ENCODE measurements at regions of chr15 and their contacts with region 1.

Region 1: DNA sequence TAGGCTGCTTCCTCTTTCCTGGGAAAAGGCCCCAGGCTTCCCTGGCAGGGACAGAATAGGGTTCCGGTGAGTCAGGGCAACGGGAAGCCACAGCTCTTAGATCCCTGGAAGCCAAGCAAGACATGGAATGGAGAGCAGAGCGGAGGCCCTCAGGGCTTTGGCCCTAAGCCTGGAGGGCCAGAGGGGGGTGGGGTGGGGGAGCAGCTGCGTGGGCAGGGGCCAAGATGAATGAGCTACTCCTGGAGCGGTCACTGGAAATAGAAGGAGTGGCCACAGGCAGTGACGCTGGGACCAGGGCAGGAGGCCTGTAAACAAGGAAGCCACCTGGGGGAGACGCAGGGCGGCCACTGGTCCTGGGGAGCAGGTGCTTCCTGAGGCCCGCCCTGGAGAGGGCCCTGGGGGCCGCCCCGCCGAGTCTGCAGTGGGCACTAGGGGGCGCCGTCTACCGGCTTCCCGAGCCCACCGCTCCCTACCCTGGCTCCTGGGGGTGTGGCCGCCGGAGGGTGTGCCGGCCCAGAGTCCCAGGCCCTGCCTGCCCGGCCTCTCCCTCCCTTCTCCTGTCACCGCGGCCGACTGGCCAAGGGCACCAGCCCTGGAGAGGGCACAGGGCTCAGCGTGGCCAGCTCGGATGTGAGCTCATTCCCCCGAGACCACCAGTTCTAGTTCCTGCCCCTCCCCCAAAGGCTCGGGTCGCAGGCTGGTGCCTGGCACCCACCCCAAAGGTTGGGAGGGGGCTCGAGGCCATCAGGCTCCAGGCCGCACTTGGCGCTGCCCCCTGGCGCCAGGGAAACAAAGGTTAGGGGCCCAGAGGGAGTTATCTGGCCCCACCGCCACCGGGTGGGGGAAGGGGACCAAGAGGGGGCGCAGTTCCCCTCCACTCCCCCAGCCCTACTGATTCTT is 12.1 kb downstream of the VPS18 start:
- DNase-seq: peak; percentile 91
- ATAC-seq: peak; percentile 81
- H3K4me3 Mint-ChIP-seq: peak overlapping the region; percentile 69
- H3K27ac Mint-ChIP-seq: peak overlapping the region; percentile 82
- H3K4me1 Mint-ChIP-seq: peaks cover 27% of the 10 kb centered on the region
- H3K27me3 Mint-ChIP-seq: no peaks in the 10 kb centered on the region

Region 2: GRCh38 chr15:40190591-40190990 is 715.8 kb before region 1 on chr15:
- CTCF ChIA-PET with region 1: no interaction called
- POLR2A ChIA-PET with region 1: no interaction called
- intact Hi-C with region 1: no loop called
- DNase-seq: no peak
- ATAC-seq: no peak
- H3K4me3 Mint-ChIP-seq: no peak overlapping the region
- H3K27ac Mint-ChIP-seq: no peak overlapping the region
- H3K4me1 Mint-ChIP-seq: no peaks in the 10 kb centered on the region
- H3K27me3 Mint-ChIP-seq: no peaks in the 10 kb centered on the region

Region 3: DNA sequence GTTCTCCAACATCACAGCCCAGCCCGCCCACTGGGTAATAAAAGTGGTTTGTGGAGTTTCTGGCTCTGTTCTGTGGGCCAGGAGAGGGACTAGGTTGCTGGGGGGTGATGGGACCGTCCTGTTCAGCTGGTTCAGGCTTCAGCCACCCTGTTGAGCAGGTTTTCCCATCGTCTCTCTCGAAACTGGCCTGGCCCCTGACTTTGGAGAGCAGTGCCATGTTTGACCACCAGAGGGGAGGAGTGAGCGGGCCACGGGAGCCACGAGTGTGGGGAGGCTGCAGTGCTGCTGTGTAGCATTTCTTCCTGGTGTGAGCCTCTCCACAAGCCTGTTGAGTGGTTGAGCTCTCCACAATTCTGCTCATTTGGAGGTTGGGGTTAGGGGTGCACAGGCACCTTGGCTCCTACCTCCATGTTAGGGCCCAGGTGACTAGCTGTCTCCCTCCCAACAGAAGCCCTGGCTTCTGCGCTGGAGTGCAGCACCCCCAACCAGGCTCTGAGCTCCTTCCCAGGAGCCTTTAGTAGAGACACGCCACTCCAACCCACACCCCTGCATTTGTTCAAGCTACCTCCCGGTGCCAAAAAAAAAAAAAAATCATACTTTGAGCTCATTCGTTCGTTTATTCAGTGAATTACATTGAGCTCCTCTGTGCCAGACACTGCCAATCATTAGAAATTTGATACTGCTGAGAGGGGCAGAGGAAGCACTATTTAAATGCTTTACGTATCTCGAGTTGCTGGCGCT is 48.6 kb before region 1 on chr15:
- CTCF ChIA-PET with region 1: interaction called, 65 read pairs
- POLR2A ChIA-PET with region 1: no interaction called
- intact Hi-C with region 1: no loop called
- DNase-seq: peak; percentile 89
- ATAC-seq: peak; percentile 94
- H3K4me3 Mint-ChIP-seq: no peak overlapping the region
- H3K27ac Mint-ChIP-seq: no peak overlapping the region
- H3K4me1 Mint-ChIP-seq: peaks cover 3% of the 10 kb centered on the region
- H3K27me3 Mint-ChIP-seq: no peaks in the 10 kb centered on the region

Region 4: GRCh38 chr15:40941528-40942336 is 35.4 kb after region 1 on chr15:
- CTCF ChIA-PET with region 1: interaction called, 9 read pairs
- POLR2A ChIA-PET with region 1: interaction called, 6 read pairs
- intact Hi-C with region 1: loop called in 1 of 2 experiments (anchors 1 kb)
- DNase-seq: peak; percentile 81
- ATAC-seq: peak; percentile 82
- H3K4me3 Mint-ChIP-seq: peak overlapping the region; percentile 80
- H3K27ac Mint-ChIP-seq: peak overlapping the region; percentile 92
- H3K4me1 Mint-ChIP-seq: peaks cover 39% of the 10 kb centered on the region
- H3K27me3 Mint-ChIP-seq: no peaks in the 10 kb centered on the region

Region 5: GRCh38 chr15:40964634-40965033 is 58.3 kb after region 1 on chr15:
- CTCF ChIA-PET with region 1: interaction called, 11 read pairs
- POLR2A ChIA-PET with region 1: no interaction called
- intact Hi-C with region 1: no loop called
- DNase-seq: no peak
- ATAC-seq: no peak
- H3K4me3 Mint-ChIP-seq: no peak overlapping the region
- H3K27ac Mint-ChIP-seq: no peak overlapping the region
- H3K4me1 Mint-ChIP-seq: no peaks in the 10 kb centered on the region
- H3K27me3 Mint-ChIP-seq: no peaks in the 10 kb centered on the region

Region 6: DNA sequence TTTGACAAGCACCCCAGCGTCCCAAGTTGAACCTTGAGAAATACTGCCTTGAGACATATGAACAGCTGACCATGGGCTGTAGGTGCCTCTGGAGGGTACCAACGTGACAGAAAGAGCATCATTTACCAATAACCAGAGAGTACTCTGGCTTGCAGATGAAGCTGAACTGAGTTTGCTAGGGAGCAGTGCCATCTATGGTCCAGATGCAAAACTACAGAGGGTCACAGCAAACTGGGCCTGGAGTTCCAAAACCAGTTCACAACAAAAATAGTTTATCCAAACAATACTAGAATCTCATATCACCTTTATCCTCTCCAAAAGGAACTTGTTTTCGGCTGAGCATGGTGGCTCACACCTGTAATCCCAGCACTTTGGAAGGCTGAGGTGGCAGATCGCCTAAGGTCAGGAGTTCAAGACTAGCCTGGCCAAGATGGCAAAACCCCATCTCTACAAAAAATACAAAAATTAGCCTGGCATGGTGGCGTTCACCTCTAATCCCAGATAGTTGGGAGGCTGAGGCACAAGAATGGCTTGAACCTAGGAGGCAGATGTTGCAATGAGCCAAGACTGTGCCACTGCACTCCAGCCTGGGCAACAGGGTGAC is 116.2 kb after region 1 on chr15:
- CTCF ChIA-PET with region 1: interaction called, 21 read pairs
- POLR2A ChIA-PET with region 1: no interaction called
- intact Hi-C with region 1: loop called (anchors 1 kb)
- DNase-seq: peak; percentile 54
- ATAC-seq: peak; percentile 80
- H3K4me3 Mint-ChIP-seq: no peak overlapping the region
- H3K27ac Mint-ChIP-seq: no peak overlapping the region
- H3K4me1 Mint-ChIP-seq: peaks cover 2% of the 10 kb centered on the region
- H3K27me3 Mint-ChIP-seq: no peaks in the 10 kb centered on the region

Region 7: GRCh38 chr15:41161336-41161735 is 255.0 kb after region 1 on chr15:
- CTCF ChIA-PET with region 1: no interaction called
- POLR2A ChIA-PET with region 1: no interaction called
- intact Hi-C with region 1: no loop called
- DNase-seq: no peak
- ATAC-seq: no peak
- H3K4me3 Mint-ChIP-seq: no peak overlapping the region
- H3K27ac Mint-ChIP-seq: no peak overlapping the region
- H3K4me1 Mint-ChIP-seq: peaks cover 11% of the 10 kb centered on the region
- H3K27me3 Mint-ChIP-seq: peaks cover 4% of the 10 kb centered on the region

Region 8: DNA sequence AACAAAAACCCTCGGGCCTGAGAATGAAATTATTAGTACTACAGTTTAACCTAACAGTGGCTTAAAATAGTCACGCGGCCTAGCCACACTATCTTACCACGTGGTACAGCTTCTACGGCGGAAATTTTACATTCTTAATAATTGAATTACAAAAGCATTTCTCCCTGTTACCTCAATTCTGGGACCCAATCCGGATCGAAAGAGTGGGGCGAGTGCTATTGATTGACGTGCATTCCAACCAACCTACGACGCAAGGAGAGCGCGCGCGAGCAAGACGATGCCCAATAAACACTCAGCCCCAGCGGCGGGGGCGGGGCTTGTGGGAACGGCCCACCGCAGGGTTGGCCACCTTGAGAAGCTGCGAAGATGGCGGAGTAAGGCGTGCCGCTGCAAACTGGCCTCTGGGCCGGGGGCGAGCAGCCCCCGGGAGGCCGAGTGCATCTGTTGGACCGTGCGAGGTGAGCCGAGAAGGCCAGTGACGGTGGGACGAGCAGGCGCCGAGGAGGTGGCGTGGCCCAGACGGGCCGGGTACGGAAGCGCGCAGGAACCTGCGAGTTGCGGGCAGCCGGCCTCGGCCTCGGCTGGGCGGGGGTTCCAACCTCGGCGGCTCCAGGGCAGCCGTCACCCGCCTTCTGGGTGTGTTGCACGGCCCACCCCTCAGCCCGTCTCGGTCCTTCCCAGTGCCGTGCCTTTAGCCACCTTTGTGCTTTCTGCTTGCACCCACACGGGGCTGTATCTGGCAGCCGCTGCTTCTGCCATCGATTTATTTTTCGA is 377.5 kb after region 1 on chr15:
- CTCF ChIA-PET with region 1: interaction called, 4 read pairs
- POLR2A ChIA-PET with region 1: interaction called, 4 read pairs
- intact Hi-C with region 1: loop called in 1 of 2 experiments (anchors 5 kb)
- DNase-seq: peak; percentile 98
- ATAC-seq: peak; percentile 98
- H3K4me3 Mint-ChIP-seq: peak overlapping the region; percentile 90
- H3K27ac Mint-ChIP-seq: peak overlapping the region; percentile 95
- H3K4me1 Mint-ChIP-seq: peaks cover 42% of the 10 kb centered on the region
- H3K27me3 Mint-ChIP-seq: no peaks in the 10 kb centered on the region

Region 9: DNA sequence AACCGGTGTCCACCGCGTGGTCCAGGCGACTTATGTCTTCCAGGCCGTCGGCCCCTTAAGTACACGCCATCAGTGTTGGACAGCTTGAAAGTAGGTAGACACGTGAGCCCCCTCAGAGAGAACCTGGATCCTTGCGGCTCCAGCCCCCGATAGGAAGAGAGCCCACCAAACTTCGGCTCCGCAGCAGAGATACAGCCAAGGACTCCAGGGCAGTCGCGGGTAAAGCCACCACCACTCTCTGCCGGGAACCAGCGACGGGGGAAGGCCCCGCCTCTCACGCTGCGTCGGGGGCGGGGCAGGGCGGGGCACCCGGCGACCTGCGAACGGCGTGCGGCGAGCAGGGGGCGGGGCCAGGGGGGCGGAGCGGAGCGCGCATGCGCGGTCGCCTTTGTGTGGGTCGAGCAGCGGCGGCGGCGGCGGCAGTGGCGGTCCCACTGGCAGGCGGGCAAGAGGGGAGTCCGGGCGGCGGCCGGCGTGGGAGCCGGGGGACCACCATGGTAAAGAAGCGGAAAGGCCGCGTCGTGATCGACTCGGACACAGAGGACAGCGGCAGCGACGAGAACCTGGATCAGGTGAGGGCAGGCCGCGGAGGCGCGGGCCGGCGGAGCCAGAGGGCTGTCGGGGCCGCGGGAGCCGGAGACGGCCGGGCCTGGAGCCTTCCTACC is 510.5 kb after region 1 on chr15 and contains the start of gene RTF1:
- CTCF ChIA-PET with region 1: no interaction called
- POLR2A ChIA-PET with region 1: no interaction called
- intact Hi-C with region 1: loop called in 1 of 2 experiments (anchors 10 kb)
- DNase-seq: peak; percentile 98
- ATAC-seq: peak; percentile 94
- H3K4me3 Mint-ChIP-seq: peak within 1 kb of the TSS; percentile 88
- H3K27ac Mint-ChIP-seq: peak within 1 kb of the TSS; percentile 92
- H3K4me1 Mint-ChIP-seq: peaks cover 38% of the 10 kb centered on the region
- H3K27me3 Mint-ChIP-seq: no peaks in the 10 kb centered on the region
- total RNA-seq, gene RTF1: 29.4 to 32.3 TPM